Head of caudate nucleus (tissue), 42 donors: ENCODE measurements at regions of chr4 and their contacts with region 1.

Region 1: DNA sequence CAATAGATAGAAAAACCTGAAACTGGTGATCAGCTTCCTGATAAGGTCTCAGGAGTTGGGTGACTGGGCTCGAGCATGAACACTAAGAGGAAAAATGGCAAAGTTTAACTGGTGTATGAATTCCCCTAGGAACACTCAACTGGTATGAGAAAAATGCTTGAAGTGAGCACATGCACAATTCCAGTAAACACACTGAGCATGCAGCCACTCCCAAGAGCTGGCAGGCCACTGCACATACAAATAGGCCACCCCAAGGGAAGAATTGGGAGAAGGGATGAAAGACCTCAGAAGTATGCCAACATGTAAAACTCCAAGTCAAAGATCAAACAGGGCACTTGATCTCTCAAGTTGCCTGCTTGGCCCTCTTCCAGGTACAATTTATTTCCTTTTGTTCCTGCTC is 45.4 kb upstream of the GNPDA2 start:
- DNase-seq: no peak

Region 2: DNA sequence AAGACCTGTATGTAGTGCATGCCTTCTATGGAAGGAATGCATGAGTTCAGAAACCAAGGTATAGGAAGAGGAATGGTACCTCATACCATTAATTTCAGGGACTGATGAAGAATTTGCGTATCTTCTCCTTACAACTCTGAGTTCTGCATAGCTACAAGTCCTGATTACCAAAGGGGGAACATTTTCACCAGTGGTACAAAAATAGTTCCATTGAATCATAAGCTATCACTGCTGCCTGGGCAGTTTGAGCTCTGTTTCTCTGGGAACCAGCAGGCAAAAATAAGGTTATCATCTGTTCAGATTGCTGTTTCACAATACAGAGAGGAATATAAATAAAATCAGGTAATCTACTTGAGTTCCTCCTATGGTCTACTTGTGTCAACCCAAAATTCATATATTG is 32.5 kb after region 1 on chr4:
- intact Hi-C with region 1: loop called (anchors 2 kb)
- DNase-seq: no peak